ENCODE measurements at regions of chr6 and their contacts with region 1.

Region 1: DNA sequence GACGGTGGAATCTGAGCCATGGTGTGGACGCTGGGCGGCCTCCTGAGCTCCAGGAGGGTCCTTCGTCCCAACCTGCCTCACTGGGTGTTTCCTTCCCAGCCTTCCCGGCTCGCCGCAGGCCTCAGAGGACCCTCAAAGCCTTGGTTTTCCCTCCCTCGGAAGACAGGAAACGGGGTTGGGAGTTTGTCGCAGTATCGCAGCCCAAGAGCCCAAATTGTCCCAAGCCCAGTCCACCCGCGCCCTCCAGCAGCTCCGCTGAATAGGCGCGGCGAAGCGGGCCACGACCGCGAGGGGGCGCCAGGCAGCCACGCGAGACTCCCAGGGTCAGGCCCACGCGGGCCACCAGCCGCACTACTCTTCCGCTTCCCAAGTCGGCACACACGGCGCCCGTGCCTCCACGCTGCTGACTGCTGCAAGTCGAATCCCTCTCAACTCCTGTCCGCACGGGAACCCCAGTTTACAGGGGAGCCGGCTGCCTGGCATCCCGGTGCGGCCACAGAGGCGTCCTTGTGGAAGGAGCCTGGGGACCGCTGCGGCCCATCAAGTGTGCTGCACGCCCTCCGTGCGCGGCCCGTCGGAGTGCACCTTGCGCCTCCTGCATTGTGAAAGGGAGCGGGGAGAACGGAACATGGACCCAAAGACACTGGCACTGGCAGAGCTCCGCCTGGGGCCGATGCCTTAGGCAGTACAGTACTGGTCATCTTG is 40.4 kb upstream of the HMGA1 start:
- DNase-seq: peak; percentile 80 to 91 (median 85)
- H3K4me3 ChIP-seq: peak overlapping the region; percentile 64
- H3K4me3 Mint-ChIP-seq: peak overlapping the region; percentile 78 to 93 (median 88)
- H3K27ac ChIP-seq: no peak overlapping the region
- H3K27ac Mint-ChIP-seq: peak overlapping the region in 3 of 8 donors; percentile 70 to 78 (median 78)
- H3K4me1 ChIP-seq: peaks cover 4% of the 10 kb centered on the region
- H3K4me1 Mint-ChIP-seq: peaks cover 5 to 11% (median 5%) of the 10 kb centered on the region in 3 donors
- H3K27me3 ChIP-seq: no peaks in the 10 kb centered on the region
- H3K27me3 Mint-ChIP-seq: peaks cover 0 to 2% of the 10 kb centered on the region in 2 donors

Region 2: DNA sequence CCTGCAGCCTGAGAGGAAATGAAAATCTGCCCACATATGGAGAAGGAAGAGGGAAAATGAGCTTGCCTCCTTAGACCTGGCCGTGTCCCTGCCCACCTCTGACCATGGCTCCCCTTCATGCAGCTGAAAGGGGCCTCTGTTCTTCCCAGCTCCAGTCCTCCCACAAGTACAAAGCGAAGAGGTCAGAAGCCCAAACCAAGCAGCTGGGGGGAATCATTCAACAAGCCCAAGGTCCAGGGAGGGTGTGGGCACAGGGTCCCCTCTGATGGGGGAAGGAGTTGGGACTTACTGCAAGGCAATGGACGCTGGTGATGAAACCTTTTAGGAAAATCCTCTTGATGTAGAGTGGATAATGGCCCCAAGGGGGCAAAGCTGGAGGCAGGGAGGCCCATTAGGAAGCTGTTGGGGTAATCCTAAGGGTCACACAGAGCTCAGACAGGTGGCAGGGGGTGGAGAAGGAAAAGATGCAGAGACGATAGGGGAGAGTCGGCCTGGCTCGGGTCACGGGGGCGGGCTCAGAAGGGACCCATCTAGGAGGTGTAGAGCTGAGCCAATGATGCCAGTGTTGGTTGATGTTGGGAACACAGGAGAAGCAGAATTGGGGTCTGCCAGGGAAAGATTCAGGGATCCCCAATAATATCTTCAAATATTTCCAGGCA is 34.3 kb before region 1 on chr6:
- CTCF ChIA-PET with region 1: interaction called, 35 read pairs
- POLR2A ChIA-PET with region 1: no interaction called
- DNase-seq: no peak
- H3K4me3 ChIP-seq: no peak overlapping the region
- H3K4me3 Mint-ChIP-seq: no peak overlapping the region
- H3K27ac ChIP-seq: no peak overlapping the region
- H3K27ac Mint-ChIP-seq: no peak overlapping the region
- H3K4me1 ChIP-seq: no peaks in the 10 kb centered on the region
- H3K4me1 Mint-ChIP-seq: no peaks in the 10 kb centered on the region
- H3K27me3 ChIP-seq: no peaks in the 10 kb centered on the region
- H3K27me3 Mint-ChIP-seq: peaks cover 5 to 12% of the 10 kb centered on the region in 2 donors

Region 3: DNA sequence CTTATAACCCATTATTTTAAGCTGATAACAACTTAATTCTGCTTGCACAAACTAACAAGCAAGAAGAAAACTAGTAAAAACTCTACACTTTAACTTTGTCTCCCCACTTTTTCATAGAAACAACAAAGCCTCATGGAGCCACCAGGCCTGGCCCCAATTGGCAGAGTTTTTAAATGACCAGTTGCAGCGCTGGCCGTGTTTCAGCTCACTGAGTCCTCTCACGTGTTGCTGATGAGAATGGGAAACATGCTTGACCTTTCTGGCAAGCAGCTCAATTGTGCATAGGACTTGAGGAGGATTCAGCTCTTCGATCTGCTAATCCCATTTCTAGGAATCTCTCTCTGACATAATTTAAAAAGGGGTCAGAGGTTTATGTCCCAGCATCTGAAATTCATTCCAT is 25.9 kb before region 1 on chr6:
- CTCF ChIA-PET with region 1: interaction called, 10 read pairs
- POLR2A ChIA-PET with region 1: no interaction called
- DNase-seq: no peak
- H3K4me3 ChIP-seq: no peak overlapping the region
- H3K4me3 Mint-ChIP-seq: no peak overlapping the region
- H3K27ac ChIP-seq: no peak overlapping the region
- H3K27ac Mint-ChIP-seq: no peak overlapping the region
- H3K4me1 ChIP-seq: no peaks in the 10 kb centered on the region
- H3K4me1 Mint-ChIP-seq: peaks cover 0 to 8% (median 4%) of the 10 kb centered on the region in 3 donors
- H3K27me3 ChIP-seq: no peaks in the 10 kb centered on the region
- H3K27me3 Mint-ChIP-seq: no peaks in the 10 kb centered on the region

Region 4: DNA sequence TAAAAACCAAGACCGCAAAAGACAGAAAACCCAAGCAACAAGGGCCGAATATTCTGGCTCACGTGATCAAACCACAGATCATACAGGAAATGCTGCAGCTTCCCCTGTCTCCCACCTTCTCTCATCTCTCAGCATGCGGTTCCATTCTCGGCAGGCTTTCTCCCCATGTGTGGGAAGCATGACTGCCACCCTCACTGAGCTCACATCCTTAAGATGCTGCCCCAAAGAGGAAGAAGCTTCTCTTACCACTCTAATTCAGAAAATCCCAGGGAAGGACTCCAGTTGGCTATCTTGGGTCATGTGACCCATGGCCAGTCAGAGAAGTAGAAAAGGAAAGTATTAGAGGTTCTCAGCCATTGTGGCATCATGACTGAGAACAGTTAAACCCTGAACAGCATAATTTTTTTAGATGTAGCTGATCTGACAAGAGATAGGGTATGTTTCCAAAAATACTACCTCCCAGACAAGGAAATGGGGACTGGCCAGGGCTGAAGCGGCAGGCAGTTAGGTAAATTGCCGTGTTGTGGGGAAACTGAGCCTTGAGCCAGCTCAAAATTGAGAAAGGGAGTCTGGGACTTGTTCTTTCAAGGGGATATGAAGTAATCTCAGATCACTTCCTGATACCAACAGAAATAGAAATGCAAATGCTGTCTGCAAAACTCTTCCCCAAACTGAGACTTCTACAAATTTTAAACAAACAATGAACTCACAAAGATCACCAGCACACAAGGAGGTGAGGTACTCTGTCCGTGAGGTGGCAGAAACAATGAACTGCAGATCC is 13.3 kb before region 1 on chr6:
- CTCF ChIA-PET with region 1: interaction called, 18 read pairs
- POLR2A ChIA-PET with region 1: interaction called, 3 read pairs
- DNase-seq: peak; percentile 55 to 89 (median 80)
- H3K4me3 ChIP-seq: peak overlapping the region; percentile 29
- H3K4me3 Mint-ChIP-seq: peak overlapping the region; percentile 41 to 77 (median 54)
- H3K27ac ChIP-seq: no peak overlapping the region
- H3K27ac Mint-ChIP-seq: peak overlapping the region; percentile 66 to 93 (median 86)
- H3K4me1 ChIP-seq: peaks cover 24% of the 10 kb centered on the region
- H3K4me1 Mint-ChIP-seq: peaks cover 22 to 30% (median 28%) of the 10 kb centered on the region in 3 donors
- H3K27me3 ChIP-seq: no peaks in the 10 kb centered on the region
- H3K27me3 Mint-ChIP-seq: peaks cover 0 to 3% of the 10 kb centered on the region in 2 donors

Region 5: GRCh38 chr6:34223956-34224940 is 28.0 kb after region 1 on chr6:
- CTCF ChIA-PET with region 1: interaction called, 15 read pairs
- POLR2A ChIA-PET with region 1: no interaction called
- DNase-seq: peak; percentile 88 to 97 (median 93)
- H3K4me3 ChIP-seq: peak overlapping the region; percentile 72
- H3K4me3 Mint-ChIP-seq: peak overlapping the region; percentile 59 to 88 (median 71)
- H3K27ac ChIP-seq: peak overlapping the region; percentile 92
- H3K27ac Mint-ChIP-seq: peak overlapping the region; percentile 64 to 99 (median 92)
- H3K4me1 ChIP-seq: peaks cover 15% of the 10 kb centered on the region
- H3K4me1 Mint-ChIP-seq: peaks cover 6 to 20% (median 8%) of the 10 kb centered on the region in 3 donors
- H3K27me3 ChIP-seq: no peaks in the 10 kb centered on the region
- H3K27me3 Mint-ChIP-seq: no peaks in the 10 kb centered on the region

Region 6: GRCh38 chr6:34414999-34415858 is 219.0 kb after region 1 on chr6:
- CTCF ChIA-PET with region 1: interaction called, 38 read pairs
- POLR2A ChIA-PET with region 1: no interaction called
- DNase-seq: peak in 3 of 5 donors; percentile 20 to 50 (median 42)
- H3K4me3 ChIP-seq: no peak overlapping the region
- H3K4me3 Mint-ChIP-seq: no peak overlapping the region
- H3K27ac ChIP-seq: no peak overlapping the region
- H3K27ac Mint-ChIP-seq: peak overlapping the region in 2 of 8 donors; percentile 6 to 64
- H3K4me1 ChIP-seq: no peaks in the 10 kb centered on the region
- H3K4me1 Mint-ChIP-seq: peaks cover 4 to 11% (median 11%) of the 10 kb centered on the region in 3 donors
- H3K27me3 ChIP-seq: no peaks in the 10 kb centered on the region
- H3K27me3 Mint-ChIP-seq: no peaks in the 10 kb centered on the region

Region 7: GRCh38 chr6:34425498-34426410 is 229.5 kb after region 1 on chr6 and contains the start of gene RPS10:
- CTCF ChIA-PET with region 1: interaction called, 10 read pairs
- POLR2A ChIA-PET with region 1: no interaction called
- DNase-seq: peak; percentile 85 to 90 (median 86)
- H3K4me3 ChIP-seq: peak within 1 kb of the TSS; percentile 98
- H3K4me3 Mint-ChIP-seq: peak within 1 kb of the TSS; percentile 97 to 100 (median 99)
- H3K27ac ChIP-seq: peak within 1 kb of the TSS; percentile 94
- H3K27ac Mint-ChIP-seq: peak within 1 kb of the TSS; percentile 96 to 99 (median 98)
- H3K4me1 ChIP-seq: peaks cover 22% of the 10 kb centered on the region
- H3K4me1 Mint-ChIP-seq: peaks cover 26 to 45% (median 33%) of the 10 kb centered on the region in 3 donors
- H3K27me3 ChIP-seq: no peaks in the 10 kb centered on the region
- H3K27me3 Mint-ChIP-seq: no peaks in the 10 kb centered on the region
- total RNA-seq, gene RPS10: 1,999 to 2,032 TPM

Measured in CD8-positive, alpha-beta memory T cell (primary cell).